Psoas muscle (tissue), 8 donors: ENCODE measurements at regions of chr6 and their contacts with region 1.

Region 1: DNA sequence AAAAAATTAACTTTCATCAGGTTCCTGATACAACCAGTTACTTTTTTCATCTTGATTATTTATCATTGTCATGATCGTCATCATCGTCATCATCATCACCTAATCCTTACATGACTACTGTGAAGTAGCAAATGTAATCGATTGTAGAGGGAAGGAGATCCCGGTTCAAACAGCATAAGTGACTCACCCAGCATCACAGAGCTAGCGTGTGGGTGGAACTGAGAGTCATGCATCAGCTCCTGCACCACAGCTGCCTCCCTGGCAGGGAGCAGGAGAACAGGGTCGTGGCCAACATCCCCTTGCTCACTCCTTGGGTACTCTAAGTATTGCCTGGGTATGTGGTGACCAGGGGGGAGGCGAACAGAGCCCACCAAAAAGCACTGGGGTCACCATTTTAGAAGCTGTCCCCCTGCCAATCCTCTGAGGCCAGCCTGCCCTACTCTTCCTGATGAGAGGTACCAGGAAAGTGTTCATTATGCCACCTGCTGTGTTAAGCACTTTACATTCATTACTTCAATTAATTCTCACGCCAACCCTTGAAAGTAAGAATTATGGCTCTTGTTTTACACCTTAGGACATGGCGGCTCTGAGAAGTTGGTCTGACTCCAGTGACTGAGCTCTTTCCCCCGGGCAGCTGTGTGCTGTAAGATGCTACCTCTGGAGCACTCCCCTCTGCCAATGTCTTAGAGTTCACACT is 425.2 kb downstream of the CD83 start:
- DNase-seq: no peak
- ATAC-seq: no peak
- H3K4me3 ChIP-seq: no peak overlapping the region
- H3K27ac ChIP-seq: no peak overlapping the region
- H3K4me1 ChIP-seq: peaks cover 26% of the 10 kb centered on the region
- H3K27me3 ChIP-seq: no peaks in the 10 kb centered on the region
- CTCF ChIP-seq: no peak

Region 2: DNA sequence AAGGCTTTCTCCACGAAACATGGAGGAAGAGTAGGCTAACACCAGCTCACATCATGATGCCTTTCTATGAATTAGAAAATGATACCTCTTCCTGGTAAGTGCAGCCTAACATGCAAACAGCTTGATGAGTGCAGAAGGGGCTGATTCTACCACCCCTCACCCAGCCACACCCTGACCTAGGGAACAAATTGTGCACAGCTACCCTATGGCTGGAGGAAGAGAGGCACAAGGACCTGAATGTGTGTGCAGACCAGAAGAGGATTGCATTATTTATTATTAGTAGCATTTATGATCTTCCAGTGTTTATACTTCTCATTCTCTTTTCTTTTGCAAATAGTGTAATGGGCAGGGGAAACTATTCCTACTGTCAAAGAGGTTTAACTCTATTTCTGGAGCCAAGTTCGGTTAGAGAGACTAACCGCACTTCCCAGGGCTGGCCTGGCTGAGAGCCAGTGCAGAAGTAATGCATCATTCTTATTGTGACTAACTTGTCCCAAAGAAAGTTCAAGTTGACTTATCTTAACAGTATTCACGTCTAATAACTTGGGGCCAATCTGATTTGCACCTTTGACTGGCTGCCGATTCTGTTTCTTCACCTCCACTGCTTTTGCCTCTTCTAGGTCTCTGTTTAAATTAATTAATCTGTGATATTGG is 187.8 kb before region 1 on chr6:
- intact Hi-C with region 1: no loop called
- DNase-seq: peak; percentile 50 to 69
- ATAC-seq: no peak
- H3K4me3 ChIP-seq: no peak overlapping the region
- H3K27ac ChIP-seq: no peak overlapping the region
- H3K4me1 ChIP-seq: no peaks in the 10 kb centered on the region
- H3K27me3 ChIP-seq: no peaks in the 10 kb centered on the region
- CTCF ChIP-seq: no peak

Region 3: DNA sequence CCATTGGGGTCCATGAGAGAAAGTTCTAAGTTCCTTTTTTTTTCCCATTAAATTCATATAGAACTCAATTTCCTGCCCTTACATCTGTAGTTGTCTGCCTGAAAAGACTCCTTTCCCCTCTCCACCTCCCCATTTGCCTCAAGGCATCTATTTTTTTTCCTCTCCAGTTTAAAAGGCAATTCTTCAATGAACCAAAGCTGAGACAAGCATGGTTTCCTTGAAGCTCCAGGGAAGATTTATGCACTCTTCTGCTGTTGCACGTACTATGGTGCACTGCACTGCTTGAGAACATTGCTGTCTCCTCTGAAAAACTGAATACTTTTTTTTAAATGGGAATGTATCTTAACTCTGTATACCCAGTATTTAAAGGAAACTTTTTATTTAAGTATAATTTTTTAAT is 39.9 kb after region 1 on chr6:
- intact Hi-C with region 1: no loop called
- DNase-seq: no peak
- ATAC-seq: no peak
- H3K4me3 ChIP-seq: no peak overlapping the region
- H3K27ac ChIP-seq: no peak overlapping the region
- H3K4me1 ChIP-seq: no peaks in the 10 kb centered on the region
- H3K27me3 ChIP-seq: no peaks in the 10 kb centered on the region
- CTCF ChIP-seq: no peak

Region 4: GRCh38 chr6:14638906-14639761 is 96.3 kb after region 1 on chr6:
- intact Hi-C with region 1: loop called in 1 of 2 experiments (anchors 5 kb)
- DNase-seq: peak; percentile 34 to 85
- ATAC-seq: peak; percentile 91 to 97 (median 96)
- H3K4me3 ChIP-seq: peak overlapping the region; percentile 57
- H3K27ac ChIP-seq: peak overlapping the region; percentile 91
- H3K4me1 ChIP-seq: peaks cover 38% of the 10 kb centered on the region
- H3K27me3 ChIP-seq: no peaks in the 10 kb centered on the region
- CTCF ChIP-seq: peak; percentile 18